ENCODE measurements at regions of chr21 and their contacts with region 1.

Region 1: DNA sequence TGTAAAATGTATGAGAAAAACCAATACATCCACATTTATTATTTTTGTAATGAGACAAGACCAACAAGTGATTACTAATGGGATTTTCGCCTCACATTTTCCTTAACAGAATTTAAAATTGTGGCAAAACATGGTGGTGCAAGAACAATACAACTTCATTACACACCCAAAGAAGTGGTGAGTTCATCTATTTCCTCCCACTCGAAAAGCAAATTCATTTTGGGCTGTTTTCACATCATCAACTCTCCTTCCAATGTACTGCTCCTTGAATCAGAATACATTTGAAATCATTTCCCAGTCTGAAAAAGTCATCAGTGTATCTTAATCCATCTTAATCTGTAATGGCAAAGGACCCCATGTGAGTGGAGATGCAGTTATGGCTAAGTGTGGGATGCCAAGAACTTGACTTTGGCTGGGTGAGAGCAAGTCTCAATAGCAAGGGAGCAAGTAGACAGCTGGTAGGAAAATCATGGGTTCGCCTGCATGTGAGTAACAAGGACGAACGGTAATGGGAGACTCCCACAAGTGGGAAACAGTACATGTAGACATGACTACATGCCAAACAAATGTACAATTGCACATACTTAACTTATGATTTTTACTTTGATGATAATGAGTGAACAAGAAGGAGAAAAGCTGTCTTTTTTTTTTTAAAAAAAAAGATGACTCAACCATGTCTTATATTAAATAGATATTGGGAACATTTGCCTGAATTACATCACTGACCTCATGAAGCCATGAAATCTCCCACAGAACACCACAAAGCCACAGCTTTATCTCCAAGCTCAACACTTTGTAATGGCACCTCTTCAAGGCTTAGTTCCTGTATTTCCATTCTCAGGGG is 46.0 kb downstream of the RUNX1 start:
- DNase-seq: peak; percentile 54 to 88 (median 88)
- H3K4me3 ChIP-seq: peak overlapping the region in 1 of 7 experiments; percentile 4
- H3K27ac ChIP-seq: no peak overlapping the region
- H3K4me1 ChIP-seq: peaks cover 4 to 78% (median 64%) of the 10 kb centered on the region in 4 experiments
- H3K27me3 ChIP-seq: no peaks in the 10 kb centered on the region

Region 2: GRCh38 chr21:34989337-34990151 is 13.6 kb before region 1 on chr21:
- CTCF ChIA-PET with region 1: interaction called, 13 read pairs
- POLR2A ChIA-PET with region 1: interaction called, 3 read pairs
- DNase-seq: no peak
- H3K4me3 ChIP-seq: no peak overlapping the region
- H3K27ac ChIP-seq: peak overlapping the region in 1 of 2 experiments; percentile 18
- H3K4me1 ChIP-seq: peaks cover 4 to 86% (median 75%) of the 10 kb centered on the region in 4 experiments
- H3K27me3 ChIP-seq: no peaks in the 10 kb centered on the region

Region 3: GRCh38 chr21:35020902-35021301 is 17.8 kb after region 1 on chr21:
- CTCF ChIA-PET with region 1: interaction called, 12 read pairs
- POLR2A ChIA-PET with region 1: no interaction called
- DNase-seq: no peak
- H3K4me3 ChIP-seq: no peak overlapping the region
- H3K27ac ChIP-seq: peak overlapping the region; percentile 25 to 35
- H3K4me1 ChIP-seq: peaks cover 32 to 86% (median 50%) of the 10 kb centered on the region in 4 experiments
- H3K27me3 ChIP-seq: no peaks in the 10 kb centered on the region

Region 4: GRCh38 chr21:35026617-35027562 is 23.8 kb after region 1 on chr21:
- CTCF ChIA-PET with region 1: interaction called, 12 read pairs
- POLR2A ChIA-PET with region 1: interaction called, 6 read pairs
- DNase-seq: peak; percentile 98 to 100 (median 99)
- H3K4me3 ChIP-seq: peak overlapping the region in 6 of 7 experiments; percentile 33 to 66 (median 43)
- H3K27ac ChIP-seq: peak overlapping the region; percentile 90 to 93
- H3K4me1 ChIP-seq: peaks cover 33 to 89% (median 71%) of the 10 kb centered on the region in 4 experiments
- H3K27me3 ChIP-seq: no peaks in the 10 kb centered on the region

Measured in common myeloid progenitor, CD34-positive (primary cell).